Breast epithelium (tissue), 4 donors: ENCODE measurements at regions of chr15 and their contacts with region 1.

Region 1: GRCh38 chr15:81227716-81228115 is 31.0 kb downstream of the IL16 start:
- DNase-seq: no peak
- H3K4me3 ChIP-seq: no peak overlapping the region
- H3K27ac ChIP-seq: no peak overlapping the region
- H3K4me1 ChIP-seq: no peaks in the 10 kb centered on the region
- H3K27me3 ChIP-seq: no peaks in the 10 kb centered on the region
- CTCF ChIP-seq: no peak
- POLR2A ChIP-seq: no peak

Region 2: DNA sequence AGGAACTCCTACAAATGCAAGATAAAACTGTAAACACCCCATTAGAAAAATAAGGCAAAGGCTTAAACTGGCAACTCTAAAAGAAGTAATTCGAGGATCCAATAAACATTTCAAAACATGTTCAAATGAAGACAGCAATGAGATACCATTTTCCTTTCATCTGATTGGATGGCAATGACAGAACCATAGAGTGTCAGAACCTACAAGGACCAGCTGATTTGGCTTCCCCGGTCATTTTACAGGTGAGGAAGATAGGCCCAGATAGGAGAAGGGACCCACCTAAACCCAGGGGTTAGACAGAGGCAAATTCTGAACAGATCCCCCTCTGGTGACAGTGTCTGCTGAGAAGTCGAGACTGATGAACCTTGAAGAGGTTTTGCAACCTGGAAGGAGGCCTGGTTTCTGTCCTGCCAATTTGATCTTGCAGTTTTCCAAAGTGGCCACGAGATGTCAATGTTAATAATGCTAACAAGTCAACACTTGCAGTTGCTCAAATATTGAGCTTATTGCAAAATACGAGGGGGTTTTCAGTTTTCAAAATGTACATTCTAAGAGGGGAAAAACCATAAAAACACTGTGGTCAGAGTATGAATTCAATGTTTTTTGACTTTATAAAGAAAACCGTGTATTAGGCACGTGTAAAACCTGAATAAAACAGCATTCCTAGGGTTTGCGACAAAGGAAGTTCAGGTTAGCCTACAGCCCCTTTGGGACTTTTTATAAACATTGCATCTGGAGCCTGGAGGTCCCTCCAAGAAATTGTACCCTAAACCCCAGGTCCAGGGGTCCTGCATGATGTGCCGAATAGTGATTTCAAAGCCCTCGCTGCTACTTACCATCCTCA is 72.1 kb before region 1 on chr15:
- intact Hi-C with region 1: loop called (anchors 2 kb)
- DNase-seq: peak in 1 of 2 donors; percentile 56
- H3K4me3 ChIP-seq: no peak overlapping the region
- H3K27ac ChIP-seq: peak overlapping the region in 1 of 2 donors; percentile 9
- H3K4me1 ChIP-seq: peaks cover 0 to 4% of the 10 kb centered on the region in 2 donors
- H3K27me3 ChIP-seq: no peaks in the 10 kb centered on the region
- CTCF ChIP-seq: peak in 2 of 3 donors; percentile 58 to 67
- POLR2A ChIP-seq: no peak